Activated T-helper 1 cell treated with anti-CD3 and anti-CD28 coated beads, Interleukin-12 subunit alpha, Interleukin-12 subunit beta, Interleukin-2, Interleukin-4 antibody, amounts not matched to agents 30 ng/mL and 10 ng/mL and 1 ng/mL, durations not matched to agents 14 hours and 24 hours and 36 hours (primary cell): ENCODE measurements at regions of chr4 and their contacts with region 1.

Region 1: DNA sequence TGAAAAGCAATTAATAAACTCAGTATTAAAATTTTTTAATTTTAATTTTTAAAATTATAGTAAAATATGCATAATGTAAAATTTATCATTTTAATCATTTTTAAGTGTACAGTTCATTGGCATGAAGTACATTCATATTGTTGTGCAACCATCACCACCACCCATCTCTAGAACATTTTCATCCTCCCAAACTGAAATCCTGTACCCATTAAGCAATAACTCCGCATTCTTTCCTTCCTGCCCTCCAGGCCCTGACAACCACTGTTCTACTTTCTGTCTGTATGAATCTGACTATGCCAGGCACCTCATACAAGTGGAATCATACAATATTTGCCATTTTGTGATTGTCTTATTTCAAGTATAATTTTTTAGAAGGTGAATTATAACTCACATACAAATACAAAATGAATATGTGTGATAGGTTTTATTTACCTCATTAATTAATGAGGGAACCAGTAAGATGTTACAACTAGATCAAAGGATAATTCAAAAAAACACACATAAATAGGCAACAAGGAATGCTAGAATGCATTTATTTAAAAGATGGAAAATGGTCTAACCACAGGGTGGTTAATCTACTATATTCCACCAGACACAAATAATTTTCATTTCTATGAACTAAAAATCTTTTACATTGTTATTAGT is 13.1 kb upstream of the AFF1 start:
- DNase-seq: no peak
- H3K4me3 Mint-ChIP-seq: no peak overlapping the region
- H3K27ac Mint-ChIP-seq: no peak overlapping the region
- H3K4me1 Mint-ChIP-seq: peaks cover 5% of the 10 kb centered on the region
- H3K27me3 Mint-ChIP-seq: no peaks in the 10 kb centered on the region

Region 2: GRCh38 chr4:86957214-86957613 is 35.5 kb after region 1 on chr4:
- intact Hi-C with region 1: no loop called
- DNase-seq: no peak
- H3K4me3 Mint-ChIP-seq: no peak overlapping the region
- H3K27ac Mint-ChIP-seq: peak overlapping the region; percentile 75
- H3K4me1 Mint-ChIP-seq: peaks cover 31% of the 10 kb centered on the region
- H3K27me3 Mint-ChIP-seq: no peaks in the 10 kb centered on the region

Region 3: GRCh38 chr4:87032884-87033533 is 111.3 kb after region 1 on chr4:
- intact Hi-C with region 1: no loop called
- DNase-seq: no peak
- H3K4me3 Mint-ChIP-seq: no peak overlapping the region
- H3K27ac Mint-ChIP-seq: no peak overlapping the region
- H3K4me1 Mint-ChIP-seq: peaks cover 16% of the 10 kb centered on the region
- H3K27me3 Mint-ChIP-seq: no peaks in the 10 kb centered on the region

Region 4: GRCh38 chr4:87093443-87094123 is 171.9 kb after region 1 on chr4:
- intact Hi-C with region 1: loop called (anchors 1 kb)
- DNase-seq: peak; percentile 22
- H3K4me3 Mint-ChIP-seq: no peak overlapping the region
- H3K27ac Mint-ChIP-seq: peak overlapping the region; percentile 62
- H3K4me1 Mint-ChIP-seq: peaks cover 25% of the 10 kb centered on the region
- H3K27me3 Mint-ChIP-seq: no peaks in the 10 kb centered on the region

Region 5: DNA sequence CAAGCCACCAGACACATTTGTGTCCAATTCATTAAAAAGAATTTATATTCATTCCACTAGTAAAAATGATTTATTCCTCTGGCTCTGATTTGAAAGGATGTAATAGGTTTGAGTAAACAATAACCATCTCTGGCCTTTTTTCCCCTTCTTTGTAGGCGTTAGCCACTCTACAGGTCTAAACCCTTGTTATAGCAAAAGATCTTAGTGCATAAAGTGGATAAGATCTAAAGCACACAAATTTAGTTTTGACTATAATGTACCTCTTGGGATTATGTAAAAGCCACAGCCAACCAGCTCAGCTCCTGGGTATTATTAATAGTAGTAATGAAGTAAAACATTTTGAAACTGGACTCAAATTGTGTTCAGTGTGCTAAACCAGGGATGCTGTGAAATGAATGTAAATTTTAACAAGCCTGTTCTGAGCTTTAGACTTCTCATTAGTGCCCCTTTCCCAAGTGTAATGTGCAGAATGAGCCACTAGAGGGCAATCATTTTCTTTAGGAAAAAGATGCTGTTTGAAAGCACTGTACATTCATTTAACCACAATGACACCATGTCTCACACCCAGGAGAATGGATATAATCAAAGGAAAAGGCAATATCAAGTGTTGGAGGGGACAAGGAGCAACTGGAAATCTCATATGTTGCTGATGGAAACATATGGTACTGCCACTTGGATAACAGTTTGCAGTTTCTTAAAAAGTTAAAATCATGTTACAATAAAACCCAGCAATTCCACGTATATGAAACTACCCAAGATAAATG is 228.9 kb after region 1 on chr4:
- intact Hi-C with region 1: loop called (anchors 2 kb)
- DNase-seq: peak; percentile 37
- H3K4me3 Mint-ChIP-seq: no peak overlapping the region
- H3K27ac Mint-ChIP-seq: no peak overlapping the region
- H3K4me1 Mint-ChIP-seq: peaks cover 7% of the 10 kb centered on the region
- H3K27me3 Mint-ChIP-seq: no peaks in the 10 kb centered on the region

Region 6: DNA sequence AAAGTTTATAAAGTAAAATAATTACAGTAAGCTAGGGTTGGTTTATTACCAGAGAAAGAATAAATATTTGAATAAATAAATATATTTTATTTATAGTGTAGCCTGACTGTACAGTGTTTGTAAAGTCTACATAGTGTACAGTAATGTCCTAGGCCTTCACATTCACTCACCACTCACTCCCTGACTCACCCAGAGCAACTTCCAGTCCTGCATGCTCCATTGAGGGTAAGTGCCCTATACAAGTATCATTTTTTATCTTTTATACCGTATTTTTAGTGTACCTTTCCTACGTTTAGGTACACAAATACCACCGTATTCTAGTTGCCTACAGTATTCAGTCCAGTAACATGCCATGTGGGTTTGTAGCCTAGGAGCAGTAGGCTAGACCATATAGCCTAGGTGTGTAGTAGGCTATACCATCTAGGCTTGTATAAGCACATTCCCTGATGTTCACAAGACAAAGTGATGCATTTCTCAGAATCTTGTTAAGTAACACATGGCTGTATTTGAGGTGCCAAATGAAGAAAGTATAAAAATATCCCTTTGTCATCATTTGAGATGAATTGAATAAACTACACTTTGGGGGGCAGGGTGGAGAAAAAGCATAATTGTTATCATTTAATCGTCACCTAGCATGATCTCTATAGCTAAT is 313.4 kb after region 1 on chr4:
- intact Hi-C with region 1: loop called (anchors 1 kb)
- DNase-seq: no peak
- H3K4me3 Mint-ChIP-seq: no peak overlapping the region
- H3K27ac Mint-ChIP-seq: no peak overlapping the region
- H3K4me1 Mint-ChIP-seq: peaks cover 7% of the 10 kb centered on the region
- H3K27me3 Mint-ChIP-seq: peaks cover 14% of the 10 kb centered on the region